Activated T-helper 1 cell treated with anti-CD3 and anti-CD28 coated beads, Interleukin-12 subunit alpha, Interleukin-12 subunit beta, Interleukin-2, Interleukin-4 antibody, amounts not matched to agents 30 ng/mL and 10 ng/mL and 1 ng/mL, durations not matched to agents 14 hours and 24 hours and 36 hours (primary cell): ENCODE measurements at regions of chr5 and their contacts with region 1.

Region 1: DNA sequence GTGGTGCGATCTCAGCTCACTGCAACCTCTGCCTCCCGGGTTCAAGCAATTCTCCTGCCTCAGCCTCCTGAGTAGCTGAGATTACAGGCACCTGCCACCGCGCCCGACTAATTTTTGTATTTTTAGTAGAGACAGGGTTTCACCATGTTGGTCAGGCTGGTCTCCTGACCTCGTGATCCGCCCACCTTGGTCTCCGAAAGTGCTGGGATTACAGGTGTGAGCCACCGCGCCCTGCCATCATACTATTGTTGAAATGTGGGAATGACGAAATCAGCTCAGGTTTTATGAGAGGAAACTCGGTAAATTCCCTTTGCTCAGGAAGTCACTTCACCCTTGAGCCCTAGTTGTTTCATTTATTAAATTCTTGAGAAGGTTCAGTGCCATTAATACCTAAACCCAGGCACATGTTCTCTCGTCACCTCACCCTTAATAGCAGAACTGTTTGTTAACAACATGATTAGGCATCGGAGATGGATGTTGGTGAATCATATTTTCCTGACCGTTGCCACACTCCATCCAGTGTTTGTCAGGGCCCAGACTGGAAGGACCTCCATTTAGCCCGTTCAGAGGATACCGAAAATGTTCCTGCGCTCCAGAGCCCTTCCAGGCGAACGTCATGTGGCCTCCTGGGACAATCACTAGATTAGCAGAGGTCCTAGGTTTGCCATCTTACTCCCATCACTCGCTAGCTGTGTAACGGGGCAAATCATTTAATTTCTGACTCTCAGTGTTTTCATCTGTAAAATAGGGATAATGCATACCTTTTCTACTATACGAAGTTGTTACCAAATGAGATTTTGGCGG is 20.0 kb upstream of the CREBRF start:
- DNase-seq: no peak
- H3K4me3 Mint-ChIP-seq: peak overlapping the region; percentile 77
- H3K27ac Mint-ChIP-seq: peak overlapping the region; percentile 92
- H3K4me1 Mint-ChIP-seq: peaks cover 54% of the 10 kb centered on the region
- H3K27me3 Mint-ChIP-seq: no peaks in the 10 kb centered on the region

Region 2: DNA sequence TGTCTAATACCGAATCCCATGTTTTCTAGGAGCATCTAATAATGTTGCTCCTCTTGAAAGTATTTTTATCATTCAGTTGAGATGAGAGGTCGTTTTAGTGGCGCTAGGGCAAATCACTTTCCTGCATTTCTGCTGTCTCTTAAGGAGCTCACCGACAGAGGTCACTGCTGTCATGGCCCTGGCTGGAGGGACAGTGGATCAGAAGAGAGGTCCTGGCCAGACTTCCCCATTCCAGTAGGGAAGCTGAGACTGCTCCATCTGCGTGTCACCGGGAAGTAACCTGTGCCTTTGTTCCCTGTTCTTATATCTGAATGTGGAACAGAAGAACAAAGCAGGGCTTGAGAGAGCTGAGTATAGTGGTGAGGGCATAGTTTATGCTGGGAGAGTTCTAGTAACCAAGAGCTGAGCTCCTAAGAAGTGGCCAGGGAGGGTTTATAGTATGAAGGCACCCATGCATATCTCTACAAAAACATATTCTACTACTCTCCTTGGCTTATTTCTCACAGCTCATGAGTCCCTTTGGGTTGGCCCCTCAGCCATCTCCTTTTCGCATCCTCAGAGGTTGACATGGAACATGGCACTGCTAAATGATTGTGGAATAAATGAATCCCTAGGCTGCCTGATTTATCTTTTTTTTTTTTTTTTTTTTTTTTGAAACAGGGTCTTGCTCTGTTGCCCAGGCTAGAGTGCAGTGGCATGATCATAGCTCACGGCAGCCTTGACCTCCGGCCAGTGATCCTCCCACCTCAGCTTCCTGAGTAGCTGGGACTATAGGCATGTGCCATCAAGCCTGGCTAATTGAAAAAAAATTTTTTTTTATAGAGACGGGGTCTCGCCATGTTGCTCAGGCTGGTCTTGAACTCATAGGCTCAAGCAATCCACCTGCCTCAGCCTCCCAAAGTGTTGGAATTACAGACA is 25.3 kb before region 1 on chr5:
- intact Hi-C with region 1: loop called (anchors 1 kb)
- DNase-seq: no peak
- H3K4me3 Mint-ChIP-seq: no peak overlapping the region
- H3K27ac Mint-ChIP-seq: peak overlapping the region; percentile 46
- H3K4me1 Mint-ChIP-seq: peaks cover 26% of the 10 kb centered on the region
- H3K27me3 Mint-ChIP-seq: no peaks in the 10 kb centered on the region